IMR-90 (cell line): ENCODE measurements at regions of chr5 and their contacts with region 1.

Region 1: DNA sequence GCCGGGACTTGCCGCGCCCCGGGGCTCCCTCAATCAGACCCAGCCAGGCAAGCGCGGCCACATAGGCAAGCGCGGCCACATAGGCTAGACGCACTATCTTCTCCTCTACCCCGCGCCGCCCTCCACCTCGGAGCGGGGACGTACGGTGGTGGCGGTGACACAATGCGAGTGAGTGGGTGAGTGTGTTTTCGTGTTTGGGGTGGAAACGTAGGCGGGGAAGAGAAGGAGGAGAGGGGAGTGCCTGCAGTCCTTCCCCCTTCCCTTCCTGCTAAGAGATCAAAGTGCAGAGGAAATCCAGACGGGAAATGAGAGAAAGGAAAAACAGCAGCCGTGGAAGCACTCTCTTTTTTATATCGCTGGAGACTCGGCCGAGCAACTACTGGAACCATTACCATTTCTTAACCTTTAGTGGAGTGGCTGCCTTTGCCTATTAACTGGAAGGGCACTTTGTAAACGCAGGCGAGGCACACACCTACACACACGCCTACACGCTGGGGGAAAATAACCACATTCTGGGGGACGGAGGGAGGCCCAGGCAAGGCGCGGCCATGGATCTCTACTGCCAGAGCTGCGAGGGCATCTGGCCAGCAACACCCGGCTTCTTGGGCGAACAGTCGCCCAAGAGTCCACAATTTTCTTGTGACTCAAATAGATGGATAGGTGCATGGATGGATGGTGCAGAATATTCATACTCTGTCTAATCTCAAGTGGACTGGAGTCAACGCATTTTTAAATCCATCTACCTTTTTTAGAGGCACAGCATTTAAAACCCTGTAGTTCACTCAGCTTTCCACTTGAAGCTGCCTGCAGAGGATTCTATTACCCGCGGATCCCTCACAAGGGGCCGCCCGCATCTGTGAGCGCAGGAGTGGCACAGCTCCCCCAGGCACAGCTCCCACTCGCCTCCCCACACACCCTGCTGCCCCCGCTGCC is 2.1 kb downstream of the EDIL3 start:
- DNase-seq: peak; percentile 53
- ATAC-seq: peak; percentile 43
- H3K4me3 ChIP-seq: peak overlapping the region; percentile 92
- H3K27ac ChIP-seq: peak overlapping the region; percentile 87
- H3K4me1 ChIP-seq: peaks cover 4% of the 10 kb centered on the region
- H3K27me3 ChIP-seq: no peaks in the 10 kb centered on the region
- CTCF ChIP-seq: no peak
- POLR2A ChIP-seq: no peak
- RAD21 ChIP-seq: no peak

Region 2: GRCh38 chr5:83718195-83718825 is 664.3 kb before region 1 on chr5:
- CTCF ChIA-PET with region 1: no interaction called
- POLR2A ChIA-PET with region 1: interaction called, 4 read pairs
- dilution Hi-C with region 1: no loop called
- in situ Hi-C with region 1: loop called (anchors 5 kb)
- intact Hi-C with region 1: loop called (anchors 1 kb)
- DNase-seq: peak; percentile 73
- ATAC-seq: peak; percentile 56
- H3K4me3 ChIP-seq: no peak overlapping the region
- H3K27ac ChIP-seq: no peak overlapping the region
- H3K4me1 ChIP-seq: peaks cover 3% of the 10 kb centered on the region
- H3K27me3 ChIP-seq: peaks cover 8% of the 10 kb centered on the region
- CTCF ChIP-seq: peak; percentile 95
- POLR2A ChIP-seq: 0 out of 2 replicates have a peak, but pooled peaks have one; percentile 33
- RAD21 ChIP-seq: peak; percentile 99

Region 3: DNA sequence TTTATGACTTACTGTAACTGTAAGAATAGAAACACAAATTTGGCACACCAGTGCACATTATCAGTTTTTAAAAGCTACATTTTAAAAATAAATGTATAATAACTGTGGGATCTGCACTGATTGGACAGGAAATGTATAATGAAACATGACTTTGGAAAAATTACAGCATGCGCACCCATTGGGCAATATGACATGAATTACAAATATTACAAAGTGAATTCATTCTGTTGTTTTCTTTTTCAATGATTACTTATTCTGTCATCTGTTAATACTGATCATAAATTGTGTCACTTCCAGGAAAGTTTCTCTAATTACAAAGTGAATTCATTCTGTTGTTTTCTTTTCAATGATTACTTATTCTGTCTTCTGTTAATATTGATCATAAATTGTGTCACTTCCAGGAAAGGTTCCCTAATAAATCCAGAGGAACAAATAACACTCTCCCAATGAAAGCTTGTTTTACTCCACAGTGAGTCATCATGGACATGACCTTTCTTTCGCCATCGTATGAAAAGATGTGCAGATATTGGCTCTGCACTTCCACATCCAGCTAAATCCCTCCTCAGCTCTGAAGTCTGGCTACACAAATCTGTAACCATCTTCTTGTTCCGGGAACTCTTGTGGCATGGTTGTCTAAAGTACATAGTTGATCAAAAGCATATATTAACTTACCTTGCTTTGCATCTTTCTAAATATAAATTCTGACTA is 365.0 kb before region 1 on chr5:
- CTCF ChIA-PET with region 1: interaction called, 3 read pairs
- POLR2A ChIA-PET with region 1: no interaction called
- dilution Hi-C with region 1: no loop called
- in situ Hi-C with region 1: no loop called
- intact Hi-C with region 1: loop called (anchors 10 kb)
- DNase-seq: peak; percentile 40
- ATAC-seq: 0 out of 2 replicates have a peak, but pooled peaks have one; percentile 35
- H3K4me3 ChIP-seq: no peak overlapping the region
- H3K27ac ChIP-seq: no peak overlapping the region
- H3K4me1 ChIP-seq: peaks cover 8% of the 10 kb centered on the region
- H3K27me3 ChIP-seq: no peaks in the 10 kb centered on the region
- CTCF ChIP-seq: no peak
- POLR2A ChIP-seq: no peak
- RAD21 ChIP-seq: no peak

Region 4: DNA sequence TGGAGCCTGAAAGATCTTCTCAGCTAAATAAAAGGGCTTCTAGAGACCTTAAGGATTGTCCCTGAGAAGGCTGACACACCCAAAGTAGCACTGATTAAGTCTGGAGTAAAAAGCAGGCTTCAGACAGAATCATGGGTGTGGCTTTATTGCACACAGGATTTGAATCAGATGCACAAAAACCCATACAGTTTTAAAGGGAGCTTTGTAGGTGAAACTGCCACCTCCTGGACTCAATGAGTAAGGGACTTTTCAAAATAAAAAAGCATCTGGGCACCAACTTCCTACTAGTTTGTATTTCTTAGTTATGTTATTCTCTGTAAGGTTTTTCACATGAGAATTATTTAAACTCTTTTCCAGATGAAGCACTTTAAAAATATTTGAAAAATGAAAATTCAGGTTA is 127.3 kb before region 1 on chr5:
- CTCF ChIA-PET with region 1: no interaction called
- POLR2A ChIA-PET with region 1: no interaction called
- dilution Hi-C with region 1: no loop called
- in situ Hi-C with region 1: no loop called
- intact Hi-C with region 1: loop called (anchors 5 kb)
- DNase-seq: peak; percentile 48
- ATAC-seq: peak; percentile 68
- H3K4me3 ChIP-seq: no peak overlapping the region
- H3K27ac ChIP-seq: no peak overlapping the region
- H3K4me1 ChIP-seq: peaks cover under 1% of the 10 kb centered on the region; the same call in 1 of the 2 replicates
- H3K27me3 ChIP-seq: no peaks in the 10 kb centered on the region
- CTCF ChIP-seq: peak; percentile 47
- POLR2A ChIP-seq: no peak
- RAD21 ChIP-seq: peak; percentile 48

Region 5: DNA sequence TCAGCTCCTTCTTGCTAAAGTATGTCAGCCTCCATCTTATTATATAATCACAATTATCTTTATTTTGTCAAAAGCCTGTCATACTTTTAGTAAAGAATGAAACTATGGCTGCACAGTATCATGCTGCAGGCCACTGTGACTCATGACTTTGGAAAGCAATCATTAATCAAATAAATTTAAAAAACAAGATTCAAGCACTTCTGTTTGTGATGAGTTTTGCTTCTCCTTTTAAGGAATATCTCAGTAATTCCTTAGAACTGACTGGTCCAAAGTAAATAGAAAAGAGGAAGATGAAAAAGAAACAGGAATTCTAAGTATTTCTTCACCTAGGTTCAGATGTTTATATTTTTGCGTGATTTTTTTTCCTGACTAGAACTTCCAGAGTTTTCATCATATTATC is 81.1 kb before region 1 on chr5:
- CTCF ChIA-PET with region 1: no interaction called
- POLR2A ChIA-PET with region 1: interaction called, 3 read pairs
- dilution Hi-C with region 1: no loop called
- in situ Hi-C with region 1: no loop called
- intact Hi-C with region 1: loop called (anchors 2 kb)
- DNase-seq: peak; percentile 56
- ATAC-seq: peak; percentile 87
- H3K4me3 ChIP-seq: no peak overlapping the region
- H3K27ac ChIP-seq: no peak overlapping the region
- H3K4me1 ChIP-seq: no peaks in the 10 kb centered on the region
- H3K27me3 ChIP-seq: no peaks in the 10 kb centered on the region
- CTCF ChIP-seq: no peak
- POLR2A ChIP-seq: no peak
- RAD21 ChIP-seq: no peak

Region 6: DNA sequence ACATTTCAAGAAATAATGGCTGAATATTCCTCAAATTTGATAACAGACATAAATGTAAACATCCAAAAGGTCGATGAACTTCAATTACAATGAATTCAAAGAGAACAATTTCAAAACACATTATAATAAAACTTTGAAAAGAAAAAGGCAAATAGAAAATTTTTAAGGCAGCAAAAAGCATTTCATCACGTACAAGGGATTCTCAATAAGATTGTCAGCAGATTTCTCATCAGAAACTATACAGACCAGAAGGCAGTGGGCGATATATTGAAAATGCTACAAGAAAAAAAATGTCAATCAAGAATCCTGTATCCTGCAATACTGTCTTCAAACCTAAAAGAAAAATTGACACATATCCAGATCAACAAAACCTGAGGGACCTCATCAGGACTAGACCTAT is 60.0 kb before region 1 on chr5:
- CTCF ChIA-PET with region 1: no interaction called
- POLR2A ChIA-PET with region 1: no interaction called
- dilution Hi-C with region 1: no loop called
- in situ Hi-C with region 1: no loop called
- intact Hi-C with region 1: no loop called
- DNase-seq: no peak
- ATAC-seq: no peak
- H3K4me3 ChIP-seq: no peak overlapping the region
- H3K27ac ChIP-seq: no peak overlapping the region
- H3K4me1 ChIP-seq: no peaks in the 10 kb centered on the region; the same call in 1 of the 2 replicates
- H3K27me3 ChIP-seq: no peaks in the 10 kb centered on the region
- CTCF ChIP-seq: no peak
- POLR2A ChIP-seq: no peak
- RAD21 ChIP-seq: no peak

Region 7: DNA sequence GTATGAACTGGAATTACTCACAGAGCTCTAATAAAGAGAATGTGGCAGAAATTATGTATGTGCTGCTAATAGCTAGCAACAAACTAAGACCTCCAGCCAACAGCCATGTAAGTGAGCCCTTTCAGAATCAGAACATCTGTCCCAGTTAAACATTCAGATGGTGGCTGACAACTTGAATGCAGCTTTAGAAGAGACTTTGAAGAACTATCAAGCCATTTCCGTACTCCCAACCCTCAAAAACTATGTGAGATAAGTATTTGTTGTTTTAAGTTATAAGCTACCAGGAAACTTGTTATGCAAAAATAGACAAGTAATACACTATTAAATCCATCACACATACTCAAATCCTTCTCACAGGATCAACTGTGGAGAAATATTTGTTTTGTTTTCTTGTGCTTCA is 207.3 kb after region 1 on chr5:
- CTCF ChIA-PET with region 1: no interaction called
- POLR2A ChIA-PET with region 1: no interaction called
- dilution Hi-C with region 1: no loop called
- in situ Hi-C with region 1: no loop called
- intact Hi-C with region 1: no loop called
- DNase-seq: no peak
- ATAC-seq: no peak
- H3K4me3 ChIP-seq: no peak overlapping the region
- H3K27ac ChIP-seq: no peak overlapping the region
- H3K4me1 ChIP-seq: no peaks in the 10 kb centered on the region
- H3K27me3 ChIP-seq: no peaks in the 10 kb centered on the region
- CTCF ChIP-seq: no peak
- POLR2A ChIP-seq: no peak
- RAD21 ChIP-seq: no peak

Region 8: GRCh38 chr5:85049020-85049419 is 666.4 kb after region 1 on chr5:
- CTCF ChIA-PET with region 1: no interaction called
- POLR2A ChIA-PET with region 1: no interaction called
- dilution Hi-C with region 1: no loop called
- in situ Hi-C with region 1: no loop called
- intact Hi-C with region 1: loop called (anchors 1 kb)
- DNase-seq: peak; percentile 70
- ATAC-seq: peak; percentile 93
- H3K4me3 ChIP-seq: no peak overlapping the region
- H3K27ac ChIP-seq: no peak overlapping the region
- H3K4me1 ChIP-seq: no peaks in the 10 kb centered on the region
- H3K27me3 ChIP-seq: no peaks in the 10 kb centered on the region
- CTCF ChIP-seq: peak; percentile 61
- POLR2A ChIP-seq: no peak
- RAD21 ChIP-seq: peak; percentile 70